T-cell (primary cell): ENCODE measurements at regions of chr14 and their contacts with region 1.

Region 1: DNA sequence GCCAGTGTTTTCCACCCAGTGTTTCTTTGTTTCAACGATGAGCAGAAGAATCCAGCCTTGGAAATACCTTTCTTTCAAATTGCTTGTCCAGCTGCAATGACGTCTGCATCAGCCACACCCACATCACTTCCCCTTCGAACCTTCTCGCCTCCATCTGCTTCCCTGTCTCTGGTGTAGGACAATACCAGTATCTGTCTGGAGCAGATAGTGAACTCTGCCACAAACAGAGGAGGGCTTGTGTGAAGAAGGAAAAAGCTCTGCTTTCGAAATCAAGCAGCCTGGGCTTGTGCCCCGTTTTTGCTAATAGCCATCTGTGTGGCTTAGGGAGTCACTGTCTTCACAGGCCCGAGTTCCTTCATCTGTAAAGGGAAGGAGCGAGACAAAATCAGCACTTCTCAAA is 415.4 kb downstream of the ZFP36L1 start:
- DNase-seq: peak in 3 of 35 experiments; percentile 8 to 41 (median 29)
- ATAC-seq: peak in 2 of 4 experiments; percentile 29 to 37
- H3K4me3 ChIP-seq: no peak overlapping the region
- H3K4me3 Mint-ChIP-seq: peak overlapping the region in 1 of 3 donors; percentile 45
- H3K27ac ChIP-seq: peak overlapping the region; percentile 43
- H3K27ac Mint-ChIP-seq: peak overlapping the region; percentile 85 to 90
- H3K4me1 ChIP-seq: peaks cover 33 to 68% of the 10 kb centered on the region in 2 experiments
- H3K4me1 Mint-ChIP-seq: peaks cover 66 to 68% (median 68%) of the 10 kb centered on the region in 3 donors
- H3K27me3 ChIP-seq: no peaks in the 10 kb centered on the region
- H3K27me3 Mint-ChIP-seq: no peaks in the 10 kb centered on the region

Region 2: DNA sequence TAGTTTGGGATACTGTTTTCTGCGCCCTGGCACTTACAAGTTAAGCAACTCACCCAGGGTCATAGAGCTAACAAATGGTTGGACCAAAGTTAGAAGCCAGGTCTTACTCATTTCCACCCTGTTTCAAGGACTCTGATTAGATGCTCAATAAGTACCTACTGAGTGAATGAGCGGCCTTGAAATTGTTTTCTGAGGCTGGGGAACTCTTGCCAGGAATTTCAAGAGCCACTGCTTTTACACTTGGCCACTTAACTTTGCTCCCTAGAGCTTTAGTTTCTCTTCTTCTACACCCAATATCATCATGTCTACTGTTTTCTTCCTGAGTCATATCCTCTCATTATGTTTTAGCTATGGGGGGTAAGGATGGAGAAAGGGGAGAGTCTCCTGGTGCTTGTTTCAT is 16.2 kb before region 1 on chr14:
- CTCF ChIA-PET with region 1: no interaction called
- POLR2A ChIA-PET with region 1: no interaction called
- DNase-seq: no peak
- ATAC-seq: no peak
- H3K4me3 ChIP-seq: no peak overlapping the region
- H3K4me3 Mint-ChIP-seq: no peak overlapping the region
- H3K27ac ChIP-seq: no peak overlapping the region
- H3K27ac Mint-ChIP-seq: no peak overlapping the region
- H3K4me1 ChIP-seq: peaks cover 28 to 51% of the 10 kb centered on the region in 2 experiments
- H3K4me1 Mint-ChIP-seq: peaks cover 40 to 54% (median 50%) of the 10 kb centered on the region in 3 donors
- H3K27me3 ChIP-seq: no peaks in the 10 kb centered on the region
- H3K27me3 Mint-ChIP-seq: no peaks in the 10 kb centered on the region

Region 3: DNA sequence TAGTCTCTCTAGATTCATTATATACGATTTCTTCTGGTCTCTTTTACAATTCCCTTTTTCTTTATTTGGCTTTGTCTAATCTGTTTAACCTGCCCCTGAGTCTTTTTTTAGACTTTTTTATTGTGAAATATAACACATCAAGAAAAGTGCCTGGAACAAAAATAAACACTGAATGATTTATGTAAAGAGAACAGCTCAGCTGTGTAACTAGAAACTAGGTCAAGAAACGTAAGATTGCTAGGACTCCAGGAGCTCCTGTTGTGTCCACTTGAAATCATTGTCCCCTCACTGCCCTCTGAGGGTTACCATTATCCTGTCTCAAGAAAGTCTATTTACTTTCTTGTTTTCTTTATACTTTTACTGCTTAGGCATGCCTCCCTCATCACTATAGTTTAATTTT is 836.9 kb after region 1 on chr14:
- CTCF ChIA-PET with region 1: no interaction called
- POLR2A ChIA-PET with region 1: interaction called in 1 of 2 experiments, 12 read pairs
- DNase-seq: no peak
- ATAC-seq: no peak
- H3K4me3 ChIP-seq: no peak overlapping the region
- H3K4me3 Mint-ChIP-seq: no peak overlapping the region
- H3K27ac ChIP-seq: no peak overlapping the region
- H3K27ac Mint-ChIP-seq: no peak overlapping the region
- H3K4me1 ChIP-seq: no peaks in the 10 kb centered on the region
- H3K4me1 Mint-ChIP-seq: peaks cover 0 to 2% (median 0%) of the 10 kb centered on the region in 3 donors
- H3K27me3 ChIP-seq: no peaks in the 10 kb centered on the region
- H3K27me3 Mint-ChIP-seq: no peaks in the 10 kb centered on the region